Activated T-helper 2 cell treated with anti-CD3 and anti-CD28 coated beads, Interferon-gamma antibody, Interleukin-2, Interleukin-4, amounts not matched to agents 10 μg/mL and 5 μg/mL and 100 μg/mL, durations not matched to agents 14 hours and 24 hours and 36 hours (primary cell): ENCODE measurements at regions of chr22 and their contacts with region 1.

Region 1: GRCh38 chr22:26672590-26673468 is 15.4 kb downstream of the MIAT start:
- DNase-seq: peak; percentile 92
- H3K4me3 Mint-ChIP-seq: peak overlapping the region; percentile 93
- H3K27ac Mint-ChIP-seq: peak overlapping the region; percentile 94
- H3K4me1 Mint-ChIP-seq: peaks cover 57% of the 10 kb centered on the region
- H3K27me3 Mint-ChIP-seq: no peaks in the 10 kb centered on the region

Region 2: GRCh38 chr22:26428515-26429457 is 244.0 kb before region 1 on chr22 and contains the start of gene ASPHD2:
- intact Hi-C with region 1: loop called (anchors 2 kb)
- DNase-seq: peak; percentile 80
- H3K4me3 Mint-ChIP-seq: peak within 1 kb of the TSS; percentile 96
- H3K27ac Mint-ChIP-seq: peak within 1 kb of the TSS; percentile 99
- H3K4me1 Mint-ChIP-seq: peaks cover 46% of the 10 kb centered on the region
- H3K27me3 Mint-ChIP-seq: peaks cover 15% of the 10 kb centered on the region
- total RNA-seq, gene ASPHD2: 14.2 and 14.5 TPM in 2 replicates

Region 3: DNA sequence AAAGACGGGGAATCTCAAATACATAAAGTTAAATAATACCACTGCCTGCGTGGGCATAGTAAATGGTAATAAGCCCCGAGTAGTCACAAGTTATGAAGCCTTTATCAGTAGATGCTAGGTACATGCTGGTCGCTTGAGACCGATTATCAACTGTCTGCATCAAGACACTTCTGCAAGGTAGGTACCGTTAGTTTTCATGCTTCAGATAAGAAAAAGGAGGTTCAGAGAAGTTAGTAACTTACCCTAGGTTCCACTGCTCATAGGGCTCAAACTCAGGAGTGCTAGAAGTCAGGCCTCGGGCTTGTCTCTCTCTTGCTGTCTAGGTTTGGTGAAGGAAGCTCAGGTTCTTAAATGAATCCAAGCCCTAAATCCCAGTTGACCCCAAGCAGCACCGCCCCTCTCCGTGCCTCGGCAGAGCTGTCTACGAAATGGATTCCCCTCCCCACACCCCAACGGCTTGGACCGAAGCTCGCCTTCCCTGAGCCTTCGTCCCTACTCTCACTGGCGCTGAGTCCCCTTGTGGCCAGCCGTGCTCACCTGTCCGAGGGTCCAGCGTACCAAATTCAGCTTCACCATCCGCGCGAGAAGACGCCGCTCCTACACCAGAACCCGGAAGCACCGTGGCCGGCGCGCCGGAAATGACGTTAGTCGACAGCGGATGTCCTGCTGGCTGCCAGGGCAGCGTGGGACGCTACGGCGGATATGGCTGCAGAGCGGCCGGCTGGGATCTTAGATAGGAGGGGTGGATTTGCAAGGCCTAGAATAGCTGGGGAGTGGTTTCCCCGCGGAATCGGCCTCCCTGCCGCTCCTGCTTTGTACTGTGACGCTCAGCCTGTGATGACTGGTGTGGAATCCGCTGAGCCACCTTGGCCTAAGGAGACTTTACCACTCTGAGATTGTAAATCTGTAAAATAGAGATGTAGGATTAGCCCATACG is 160.7 kb before region 1 on chr22 and contains the start of gene TFIP11:
- intact Hi-C with region 1: loop called (anchors 2 kb)
- DNase-seq: peak; percentile 88
- H3K4me3 Mint-ChIP-seq: peak within 1 kb of the TSS; percentile 100
- H3K27ac Mint-ChIP-seq: peak within 1 kb of the TSS; percentile 97
- H3K4me1 Mint-ChIP-seq: peaks cover 27% of the 10 kb centered on the region
- H3K27me3 Mint-ChIP-seq: no peaks in the 10 kb centered on the region
- total RNA-seq, gene TFIP11: 49.7 and 55.0 TPM in 2 replicates

Region 4: DNA sequence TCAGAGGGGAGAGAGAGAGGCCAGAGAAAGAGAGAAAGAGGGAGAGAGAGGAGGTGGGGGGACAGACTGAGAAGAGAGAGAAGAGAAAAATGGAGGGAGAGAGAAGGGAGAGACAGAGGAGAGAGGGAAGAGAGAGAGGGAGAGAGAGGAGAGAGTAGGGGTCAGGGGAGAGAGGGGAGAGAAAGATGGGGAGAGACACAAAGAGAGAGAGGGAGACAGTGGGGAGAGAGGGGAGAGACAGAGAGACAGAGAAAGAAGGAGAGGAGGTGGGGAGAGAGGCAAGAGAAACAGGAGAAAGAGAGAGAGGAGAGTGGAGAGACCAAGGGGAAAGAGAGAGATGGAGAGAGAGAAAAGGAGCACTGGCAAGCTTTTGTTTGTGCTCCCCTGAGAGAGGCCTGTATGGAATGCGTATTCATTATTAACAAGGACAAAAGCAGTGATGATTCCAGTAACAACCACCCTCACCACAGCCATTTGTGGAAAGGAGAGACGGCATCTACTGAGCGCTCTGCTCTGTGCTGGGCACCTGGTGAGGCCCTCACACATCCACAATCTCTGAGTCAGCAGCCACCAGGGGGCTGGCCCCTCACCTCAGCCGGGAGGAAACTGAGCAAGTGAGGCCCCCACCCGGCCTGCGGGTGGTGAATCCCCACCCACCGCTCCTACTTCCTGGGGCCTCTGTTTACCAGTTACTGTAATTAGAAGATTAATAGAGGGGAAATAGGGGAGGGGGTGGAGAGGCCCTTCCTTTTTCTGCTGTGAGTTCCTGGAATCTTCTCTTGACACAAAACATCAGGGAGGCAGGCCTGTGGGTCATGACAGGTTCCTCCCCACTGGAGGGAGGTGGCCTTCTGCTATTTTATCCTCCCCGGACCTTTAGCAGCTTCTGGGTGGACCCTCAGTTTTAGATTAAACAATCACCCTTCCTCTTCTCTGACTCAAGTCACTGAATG is 30.1 kb before region 1 on chr22:
- intact Hi-C with region 1: loop called (anchors 1 kb)
- DNase-seq: peak; percentile 60
- H3K4me3 Mint-ChIP-seq: peak overlapping the region; percentile 54
- H3K27ac Mint-ChIP-seq: peak overlapping the region; percentile 89
- H3K4me1 Mint-ChIP-seq: peaks cover 54% of the 10 kb centered on the region
- H3K27me3 Mint-ChIP-seq: no peaks in the 10 kb centered on the region